Dorsolateral prefrontal cortex (tissue), 120 donors: ENCODE measurements at regions of chr13 and their contacts with region 1.

Region 1: GRCh38 chr13:52652196-52652979 is at the start of gene SUGT1:
- DNase-seq: peak; percentile 93 to 98 (median 96)
- H3K4me3 ChIP-seq: peak within 1 kb of the TSS; percentile 63 to 98 (median 89)
- H3K27ac ChIP-seq: peak within 1 kb of the TSS; percentile 93 to 100 (median 99)
- H3K27me3 ChIP-seq: no peaks in the 10 kb centered on the region
- CTCF ChIP-seq: peak; percentile 24 to 76 (median 55)
- total RNA-seq, gene SUGT1: 53.9 to 120 (median 77.9) TPM

Region 2: DNA sequence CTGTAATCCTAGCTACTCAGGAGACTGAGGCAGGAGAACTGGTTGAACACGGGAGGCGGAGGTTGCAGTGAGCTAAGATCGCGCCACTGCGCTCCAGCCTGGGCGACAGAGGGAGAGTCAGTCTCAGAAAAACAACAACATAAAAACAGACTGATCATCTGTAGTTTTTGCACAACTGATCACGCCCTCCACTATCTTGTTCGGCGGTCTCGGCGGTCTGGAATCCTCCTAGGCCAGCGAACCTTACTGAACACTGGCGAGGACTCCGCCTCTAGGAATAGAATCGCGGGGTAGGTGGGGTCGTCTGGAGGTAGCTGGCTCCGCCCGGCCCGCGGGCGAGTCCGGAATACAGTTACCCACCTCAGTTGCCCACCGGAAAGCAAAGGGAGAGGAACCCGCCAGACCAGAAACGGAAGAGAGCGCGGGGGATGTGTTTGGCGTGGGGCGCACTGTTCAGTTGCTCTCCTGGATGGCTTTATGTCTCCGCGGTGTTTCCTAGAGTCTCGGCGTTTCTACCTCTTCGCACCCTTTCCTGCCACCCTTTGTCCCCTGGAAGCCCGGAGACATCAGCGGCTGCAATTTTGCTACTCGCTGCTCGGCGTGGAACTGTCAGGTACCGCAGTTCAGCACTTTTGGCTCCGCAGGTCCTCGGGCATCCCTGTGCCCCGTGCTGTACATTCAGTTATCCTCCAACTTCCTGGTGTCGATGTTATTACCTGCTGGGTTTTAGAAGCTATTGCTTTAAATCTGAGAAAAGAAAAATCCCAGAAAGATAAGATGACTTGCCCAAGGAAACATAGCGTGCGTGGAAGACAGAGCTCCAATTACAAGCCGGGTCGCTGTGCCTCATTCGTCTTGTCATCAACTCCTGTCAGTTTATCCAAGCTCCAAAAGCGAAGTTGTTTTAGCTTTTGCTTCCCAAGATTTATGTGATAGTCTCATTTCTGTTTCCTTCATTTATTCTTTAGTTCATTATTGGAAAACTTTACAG is 35.0 kb before region 1 on chr13:
- intact Hi-C with region 1: loop called (anchors 1 to 2 kb)
- DNase-seq: peak; percentile 45 to 89 (median 80)
- H3K4me3 ChIP-seq: peak overlapping the region; percentile 55 to 95 (median 80)
- H3K27ac ChIP-seq: peak overlapping the region in 57 of 59 donors; percentile 21 to 93 (median 79)
- H3K27me3 ChIP-seq: no peaks in the 10 kb centered on the region
- CTCF ChIP-seq: peak in 14 of 56 donors; percentile 7 to 28 (median 16)

Region 3: GRCh38 chr13:52738719-52739467 is 86.5 kb after region 1 on chr13:
- intact Hi-C with region 1: loop called in 1 of 2 experiments (anchors 5 kb)
- DNase-seq: peak in 6 of 10 donors; percentile 20 to 64 (median 51)
- H3K4me3 ChIP-seq: peak overlapping the region; percentile 33 to 80 (median 64)
- H3K27ac ChIP-seq: peak overlapping the region in 7 of 59 donors; percentile 2 to 64 (median 29)
- H3K27me3 ChIP-seq: peaks cover 0 to 40% (median 11%) of the 10 kb centered on the region in 45 donors
- CTCF ChIP-seq: peak in 52 of 56 donors; percentile 32 to 88 (median 64)

Region 4: DNA sequence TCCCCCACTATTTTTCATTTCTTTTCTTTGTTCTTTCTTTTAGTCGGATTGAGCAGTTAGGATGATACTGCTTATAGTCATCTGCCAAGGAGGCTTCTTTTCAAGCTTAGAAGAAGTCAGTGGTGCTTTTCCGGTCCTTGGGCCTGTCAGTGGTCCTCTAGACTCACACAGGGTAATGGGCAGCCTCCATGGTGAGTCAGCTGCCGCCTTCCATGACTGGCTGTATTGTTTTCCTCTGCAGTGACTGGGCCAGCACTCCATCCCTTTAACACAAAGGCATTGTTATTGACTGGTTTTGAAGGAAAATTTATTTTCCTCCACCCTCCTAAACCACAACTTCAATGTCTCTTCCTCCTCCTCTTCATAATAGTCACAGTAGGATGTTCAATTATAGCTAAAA is 134.4 kb after region 1 on chr13:
- intact Hi-C with region 1: loop called (anchors 5 kb)
- DNase-seq: peak; percentile 3 to 88 (median 74)
- H3K4me3 ChIP-seq: peak overlapping the region in 2 of 59 donors; percentile 0
- H3K27ac ChIP-seq: peak overlapping the region; percentile 58 to 95 (median 84)
- H3K27me3 ChIP-seq: no peaks in the 10 kb centered on the region
- CTCF ChIP-seq: peak in 5 of 56 donors; percentile 14 to 35 (median 21)

Region 5: GRCh38 chr13:53137779-53138178 is 485.4 kb after region 1 on chr13:
- intact Hi-C with region 1: no loop called
- DNase-seq: no peak
- H3K4me3 ChIP-seq: no peak overlapping the region
- H3K27ac ChIP-seq: no peak overlapping the region
- H3K27me3 ChIP-seq: peaks cover 0 to 5% (median 0%) of the 10 kb centered on the region in 45 donors
- CTCF ChIP-seq: no peak